ENCODE measurements at regions of chr17 and their contacts with region 1.

Region 1: DNA sequence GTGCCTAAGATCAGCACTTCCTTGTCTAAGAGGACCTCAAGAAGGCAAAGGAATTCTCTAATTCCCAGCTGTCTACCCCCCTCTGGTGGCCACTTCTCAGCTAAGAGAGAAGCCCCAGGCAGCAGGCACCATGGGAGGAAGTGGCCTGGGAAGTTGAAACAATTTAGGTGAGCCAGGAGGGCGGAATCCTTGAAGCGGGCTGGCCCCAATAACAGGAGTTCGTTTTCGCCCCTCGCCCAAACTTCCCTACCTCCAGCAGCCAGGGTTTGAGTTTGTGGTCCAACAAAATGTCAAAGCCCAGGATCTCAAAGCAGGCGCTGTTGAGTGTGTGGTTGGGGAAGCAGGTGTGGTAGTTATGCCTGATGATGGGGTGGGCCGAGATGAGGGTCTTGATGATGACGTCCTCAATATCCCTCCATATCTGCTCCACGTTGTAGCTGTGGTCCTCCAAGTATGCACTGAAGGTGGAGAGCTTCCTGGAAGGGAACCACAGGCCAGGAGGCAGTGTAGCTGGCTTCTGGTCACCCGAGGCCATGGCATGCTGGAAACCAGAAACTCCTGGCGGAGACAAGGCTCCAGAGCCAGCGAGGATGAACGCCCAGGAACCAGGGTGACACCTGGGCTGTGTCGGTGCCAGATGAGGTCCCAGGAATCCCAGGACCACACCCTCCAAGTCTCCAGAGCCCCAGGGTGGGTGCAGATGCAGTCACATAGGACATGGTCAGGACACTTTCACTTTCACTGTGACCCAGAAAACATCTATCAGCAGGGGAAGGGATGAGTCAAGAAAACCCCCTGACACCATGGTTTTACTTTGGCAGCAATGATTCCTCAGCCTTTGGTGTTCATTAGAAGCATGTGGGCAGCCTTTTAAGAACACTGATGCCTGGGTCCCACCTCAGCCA is 25.6 kb downstream of the TTLL6 start:
- DNase-seq: peak; percentile 75
- ATAC-seq: peak; percentile 95
- H3K4me3 ChIP-seq: peak overlapping the region; percentile 7 to 23; a peak in 3 of 4 replicates
- H3K27ac ChIP-seq: peak overlapping the region; percentile 73
- H3K4me1 ChIP-seq: peaks cover 23% of the 10 kb centered on the region
- H3K27me3 ChIP-seq: no peaks in the 10 kb centered on the region
- CTCF ChIP-seq: peak; percentile 96

Region 2: DNA sequence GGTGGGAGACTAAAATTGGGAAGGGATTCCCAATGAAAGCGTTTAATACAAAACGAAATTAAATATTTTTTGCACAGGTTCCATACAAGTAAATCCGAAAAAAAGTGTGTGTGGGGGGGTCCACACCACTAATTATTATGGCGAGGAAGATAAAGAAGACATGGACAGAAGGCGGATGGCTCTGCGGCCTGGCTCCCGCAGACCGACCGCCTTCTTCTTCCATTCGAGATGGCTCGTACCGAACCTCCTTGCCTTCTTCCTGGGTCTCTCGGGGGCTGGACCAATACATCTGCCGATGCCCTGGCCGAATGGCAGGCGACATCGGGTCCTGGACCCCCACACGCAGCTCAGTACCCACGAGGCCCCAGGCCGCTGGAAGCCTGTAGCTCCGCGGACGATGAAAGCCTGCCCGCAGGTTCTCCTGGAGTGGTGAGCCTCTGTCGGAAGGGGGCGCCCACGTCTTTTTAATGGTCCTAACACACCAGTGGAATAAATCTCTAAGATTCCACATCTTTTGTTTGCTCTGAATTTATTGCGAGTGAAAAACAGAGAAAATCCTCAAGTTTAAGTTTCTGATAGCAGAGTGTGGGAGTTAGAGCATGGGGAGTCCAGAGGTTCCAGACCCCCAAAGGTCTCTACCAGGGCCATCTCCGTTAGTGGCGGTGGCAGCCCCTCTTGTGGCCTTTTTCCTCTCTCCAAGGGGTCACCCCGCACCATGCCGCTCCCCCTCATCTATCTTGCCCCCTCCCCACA is 67.0 kb before region 1 on chr17:
- CTCF ChIA-PET with region 1: interaction called, 98 read pairs
- POLR2A ChIA-PET with region 1: no interaction called
- in situ Hi-C with region 1: no loop called
- intact Hi-C with region 1: loop called (anchors 1 kb)
- DNase-seq: peak; percentile 22
- ATAC-seq: peak; percentile 85
- H3K4me3 ChIP-seq: peak overlapping the region in 1 of 2 experiments; percentile 4; a peak in 1 of 4 replicates
- H3K27ac ChIP-seq: no peak overlapping the region
- H3K4me1 ChIP-seq: peaks cover 3% of the 10 kb centered on the region; the same call in 1 of the 2 replicates
- H3K27me3 ChIP-seq: no peaks in the 10 kb centered on the region
- CTCF ChIP-seq: peak; percentile 95

Region 3: DNA sequence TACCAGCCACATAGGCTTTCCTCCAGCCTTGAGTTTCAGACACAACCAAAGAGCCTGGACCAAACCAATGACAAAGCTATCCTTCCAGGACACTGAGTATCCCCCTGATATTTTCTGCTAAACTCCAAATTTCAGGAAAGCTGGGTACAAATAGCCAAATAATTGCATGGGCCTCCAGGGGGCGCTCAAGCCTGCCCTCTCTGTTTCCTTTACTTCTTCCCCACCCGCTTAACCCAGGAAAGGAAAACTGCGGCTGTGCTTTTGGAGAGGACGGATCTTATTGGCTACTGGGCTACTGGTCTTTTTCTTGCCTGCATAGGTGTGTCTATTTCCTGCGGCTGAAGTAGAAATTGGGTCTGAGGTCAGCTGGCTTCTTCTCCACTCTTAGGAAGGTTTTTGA is 388.9 kb after region 1 on chr17:
- CTCF ChIA-PET with region 1: no interaction called
- POLR2A ChIA-PET with region 1: no interaction called
- in situ Hi-C with region 1: no loop called
- intact Hi-C with region 1: no loop called
- DNase-seq: peak; percentile 28
- ATAC-seq: peak; percentile 83
- H3K4me3 ChIP-seq: no peak overlapping the region
- H3K27ac ChIP-seq: no peak overlapping the region
- H3K4me1 ChIP-seq: no peaks in the 10 kb centered on the region; the same call in 1 of the 2 replicates
- H3K27me3 ChIP-seq: no peaks in the 10 kb centered on the region
- CTCF ChIP-seq: peak; percentile 99

Measured in Panc1 (cell line).